ENCODE measurements at regions of chr5 and their contacts with region 1.

Region 1: GRCh38 chr5:151694035-151694485 is 7.3 kb upstream of the SPARC start:
- DNase-seq: peak in 9 of 10 donors; percentile 44 to 92 (median 77)
- H3K4me3 ChIP-seq: no peak overlapping the region
- H3K27ac ChIP-seq: peak overlapping the region in 58 of 59 donors; percentile 68 to 98 (median 91)
- H3K27me3 ChIP-seq: no peaks in the 10 kb centered on the region
- CTCF ChIP-seq: peak in 3 of 56 donors; percentile 8 to 21 (median 13)

Region 2: GRCh38 chr5:151632524-151632923 is 61.5 kb before region 1 on chr5:
- intact Hi-C with region 1: no loop called
- DNase-seq: no peak
- H3K4me3 ChIP-seq: no peak overlapping the region
- H3K27ac ChIP-seq: no peak overlapping the region
- H3K27me3 ChIP-seq: no peaks in the 10 kb centered on the region
- CTCF ChIP-seq: no peak

Region 3: DNA sequence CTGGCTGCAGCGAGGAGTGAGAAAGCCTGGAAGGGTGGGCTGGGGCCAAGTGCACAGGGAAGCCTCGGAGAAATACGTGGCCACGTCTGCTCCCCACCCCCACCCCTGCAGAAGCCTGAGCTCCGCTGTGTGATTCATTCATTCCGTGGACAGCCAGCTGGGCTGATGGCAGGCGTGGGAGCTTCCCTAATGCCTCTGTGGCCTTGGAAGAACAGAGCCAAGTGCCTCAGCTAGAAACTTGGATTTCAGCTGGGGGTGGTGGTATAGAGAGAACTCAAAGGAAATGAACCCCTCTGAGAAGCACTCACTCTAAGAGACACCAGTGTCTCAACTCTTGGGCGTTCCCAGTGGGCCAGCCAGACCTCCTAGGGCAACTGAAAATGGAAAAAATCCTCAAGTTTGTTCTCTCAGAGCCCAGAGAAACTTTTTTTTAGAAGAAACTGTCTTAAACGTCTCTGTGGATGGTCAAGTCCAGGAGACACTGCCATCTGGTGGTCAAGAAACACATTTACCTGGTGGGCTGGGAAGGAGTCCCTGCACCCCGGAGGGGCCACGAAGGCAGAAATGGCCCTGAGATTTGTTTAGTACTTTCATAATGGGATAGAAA is 46.4 kb after region 1 on chr5:
- intact Hi-C with region 1: loop called in 1 of 2 experiments (anchors 2 kb)
- DNase-seq: peak in 6 of 10 donors; percentile 28 to 57 (median 50)
- H3K4me3 ChIP-seq: peak overlapping the region in 7 of 59 donors; percentile 2 to 39 (median 12)
- H3K27ac ChIP-seq: peak overlapping the region in 36 of 59 donors; percentile 6 to 76 (median 42)
- H3K27me3 ChIP-seq: no peaks in the 10 kb centered on the region
- CTCF ChIP-seq: peak; percentile 81 to 98 (median 93)

Region 4: DNA sequence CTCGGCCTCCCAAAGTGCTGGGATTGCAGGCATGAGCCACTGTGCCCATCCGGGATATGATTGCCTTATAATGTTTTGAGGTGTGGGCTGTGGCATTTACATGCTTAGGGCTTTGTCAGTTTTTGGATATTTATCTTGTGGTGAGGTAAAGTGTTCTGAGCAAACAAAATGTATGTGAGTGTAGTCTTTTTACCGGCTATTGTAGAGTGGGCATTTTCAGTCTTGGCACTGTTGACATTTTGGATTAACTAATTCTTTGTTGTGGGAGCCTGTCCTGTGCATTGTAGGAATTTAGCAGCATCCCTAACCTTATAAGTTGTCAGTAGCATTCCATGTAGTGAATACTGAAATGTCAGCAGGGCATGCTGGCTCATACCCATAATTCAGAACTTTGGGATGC is 99.3 kb after region 1 on chr5:
- intact Hi-C with region 1: no loop called
- DNase-seq: no peak
- H3K4me3 ChIP-seq: no peak overlapping the region
- H3K27ac ChIP-seq: no peak overlapping the region
- H3K27me3 ChIP-seq: no peaks in the 10 kb centered on the region
- CTCF ChIP-seq: no peak

Region 5: GRCh38 chr5:151896031-151896691 is 202.1 kb after region 1 on chr5:
- intact Hi-C with region 1: no loop called
- DNase-seq: no peak
- H3K4me3 ChIP-seq: no peak overlapping the region
- H3K27ac ChIP-seq: no peak overlapping the region
- H3K27me3 ChIP-seq: peaks cover 0 to 10% (median 0%) of the 10 kb centered on the region in 45 donors
- CTCF ChIP-seq: no peak

Measured in dorsolateral prefrontal cortex (tissue), 120 donors.